CD8-positive, alpha-beta T cell (primary cell): ENCODE measurements at regions of chr6 and their contacts with region 1.

Region 1: GRCh38 chr6:52304983-52305390 is 20.4 kb upstream of the MCM3 start:
- DNase-seq: peak in 1 of 9 experiments; percentile 46
- ATAC-seq: peak; percentile 46
- H3K4me3 ChIP-seq: peak overlapping the region in 1 of 2 experiments; percentile 8
- H3K4me3 Mint-ChIP-seq: peak overlapping the region; percentile 58
- H3K27ac ChIP-seq: peak overlapping the region; percentile 38 to 78
- H3K27ac Mint-ChIP-seq: peak overlapping the region; percentile 88
- H3K4me1 ChIP-seq: peaks cover 71% of the 10 kb centered on the region
- H3K4me1 Mint-ChIP-seq: peaks cover 71% of the 10 kb centered on the region
- H3K27me3 ChIP-seq: no peaks in the 10 kb centered on the region
- H3K27me3 Mint-ChIP-seq: no peaks in the 10 kb centered on the region
- CTCF ChIP-seq: no peak

Region 2: DNA sequence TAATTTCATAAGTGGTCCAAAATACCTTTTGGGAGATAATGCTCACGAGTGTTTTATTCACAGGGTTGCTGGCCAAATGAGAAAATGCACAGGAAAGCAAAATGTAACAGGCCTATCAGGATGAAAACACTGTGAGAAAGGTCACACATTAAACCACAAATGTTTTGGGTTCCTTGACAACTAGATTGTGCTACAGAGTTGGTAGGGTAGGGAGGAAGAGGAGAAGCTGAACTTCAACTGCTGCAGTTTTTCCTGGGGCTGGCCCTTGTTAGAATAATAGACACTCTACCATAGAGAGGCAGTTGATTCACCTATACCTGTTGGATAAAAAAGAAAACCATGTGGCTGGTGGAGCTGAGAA is 28.8 kb after region 1 on chr6:
- CTCF ChIA-PET with region 1: interaction called, 4 read pairs
- POLR2A ChIA-PET with region 1: interaction called, 4 read pairs
- intact Hi-C with region 1: loop called in 1 of 2 experiments (anchors 2 kb)
- DNase-seq: peak in 5 of 9 experiments; percentile 1 to 78 (median 23)
- ATAC-seq: peak; percentile 76
- H3K4me3 ChIP-seq: no peak overlapping the region
- H3K4me3 Mint-ChIP-seq: peak overlapping the region; percentile 69
- H3K27ac ChIP-seq: peak overlapping the region; percentile 56 to 85
- H3K27ac Mint-ChIP-seq: peak overlapping the region; percentile 94
- H3K4me1 ChIP-seq: peaks cover 66% of the 10 kb centered on the region
- H3K4me1 Mint-ChIP-seq: peaks cover 68% of the 10 kb centered on the region
- H3K27me3 ChIP-seq: no peaks in the 10 kb centered on the region
- H3K27me3 Mint-ChIP-seq: no peaks in the 10 kb centered on the region
- CTCF ChIP-seq: no peak

Region 3: DNA sequence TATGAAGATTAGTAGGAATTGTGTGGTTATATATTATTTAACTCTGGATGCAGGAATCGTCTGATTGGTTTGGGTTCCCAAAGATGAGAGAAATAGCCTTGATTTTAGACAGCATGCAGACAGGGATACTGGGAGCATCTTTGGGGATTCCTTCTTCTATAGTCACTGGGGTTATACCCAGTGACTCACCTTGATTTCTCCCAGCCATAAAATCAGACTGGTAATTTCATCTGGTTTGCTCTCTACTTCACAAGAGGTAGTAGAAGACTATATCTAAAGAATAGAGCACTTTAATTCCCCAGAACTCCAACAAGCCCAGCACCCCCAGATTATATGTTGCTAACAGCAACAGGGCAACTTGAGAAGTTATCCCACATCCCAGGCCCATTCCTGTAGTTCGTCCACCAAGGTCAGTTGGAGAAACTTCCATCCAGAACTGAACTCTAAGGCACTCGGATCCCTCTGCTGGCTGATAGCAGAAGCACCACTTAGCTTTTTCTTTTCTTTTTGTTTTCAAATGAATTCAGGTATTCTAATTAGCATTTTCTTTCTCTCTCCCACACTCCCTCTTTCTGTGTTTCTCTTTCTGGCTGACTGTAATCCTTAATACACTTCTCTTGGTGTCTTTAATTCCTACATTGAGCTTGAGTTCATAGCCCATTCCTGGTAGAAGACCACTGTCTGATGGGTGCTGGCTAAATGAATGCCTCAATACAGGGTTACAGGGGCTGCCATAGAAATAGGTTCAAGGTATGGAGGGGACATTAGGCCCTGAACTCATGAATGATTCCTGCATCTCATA is 94.7 kb after region 1 on chr6:
- CTCF ChIA-PET with region 1: interaction called, 9 read pairs
- POLR2A ChIA-PET with region 1: interaction called, 3 read pairs
- intact Hi-C with region 1: loop called in 1 of 2 experiments (anchors 1 kb)
- DNase-seq: peak in 6 of 9 experiments; percentile 25 to 76 (median 52)
- ATAC-seq: peak; percentile 52
- H3K4me3 ChIP-seq: no peak overlapping the region
- H3K4me3 Mint-ChIP-seq: peak overlapping the region; percentile 53
- H3K27ac ChIP-seq: peak overlapping the region; percentile 45 to 75
- H3K27ac Mint-ChIP-seq: peak overlapping the region; percentile 93
- H3K4me1 ChIP-seq: peaks cover 71% of the 10 kb centered on the region
- H3K4me1 Mint-ChIP-seq: peaks cover 82% of the 10 kb centered on the region
- H3K27me3 ChIP-seq: no peaks in the 10 kb centered on the region
- H3K27me3 Mint-ChIP-seq: no peaks in the 10 kb centered on the region
- CTCF ChIP-seq: peak; percentile 96